ENCODE measurements at regions of chr20 and their contacts with region 1.

Region 1: GRCh38 chr20:50958615-50959542 is at the start of gene MOCS3:
- DNase-seq: peak; percentile 86
- H3K4me3 ChIP-seq: peak within 1 kb of the TSS; percentile 78 to 100 (median 99)
- H3K27ac ChIP-seq: peak within 1 kb of the TSS; percentile 99
- H3K4me1 ChIP-seq: peaks cover 29% of the 10 kb centered on the region
- H3K27me3 ChIP-seq: no peaks in the 10 kb centered on the region
- CTCF ChIP-seq: no peak
- total RNA-seq, gene MOCS3: 7.2 to 10.8 TPM

Region 2: GRCh38 chr20:50895111-50895830 is 63.6 kb before region 1 on chr20:
- CTCF ChIA-PET with region 1: no interaction called
- dilution Hi-C with region 1: no loop called
- in situ Hi-C with region 1: no loop called
- intact Hi-C with region 1: no loop called
- DNase-seq: no peak
- H3K4me3 ChIP-seq: no peak overlapping the region
- H3K27ac ChIP-seq: no peak overlapping the region
- H3K4me1 ChIP-seq: no peaks in the 10 kb centered on the region
- H3K27me3 ChIP-seq: no peaks in the 10 kb centered on the region
- CTCF ChIP-seq: no peak

Region 3: GRCh38 chr20:50919567-50919966 is 39.3 kb before region 1 on chr20:
- CTCF ChIA-PET with region 1: interaction called, 5 read pairs
- dilution Hi-C with region 1: loop called (anchors 5 kb)
- in situ Hi-C with region 1: no loop called
- intact Hi-C with region 1: no loop called
- DNase-seq: peak; percentile 91
- H3K4me3 ChIP-seq: no peak overlapping the region
- H3K27ac ChIP-seq: peak overlapping the region; percentile 70
- H3K4me1 ChIP-seq: peaks cover 36% of the 10 kb centered on the region
- H3K27me3 ChIP-seq: no peaks in the 10 kb centered on the region
- CTCF ChIP-seq: no peak

Region 4: GRCh38 chr20:50929299-50930138 is 29.4 kb before region 1 on chr20:
- CTCF ChIA-PET with region 1: interaction called, 3 read pairs
- dilution Hi-C with region 1: loop called (anchors 5 kb)
- in situ Hi-C with region 1: no loop called
- intact Hi-C with region 1: loop called (anchors 2 kb)
- DNase-seq: peak; percentile 87
- H3K4me3 ChIP-seq: peak overlapping the region; percentile 70 to 93 (median 80)
- H3K27ac ChIP-seq: peak overlapping the region; percentile 74
- H3K4me1 ChIP-seq: peaks cover 20% of the 10 kb centered on the region
- H3K27me3 ChIP-seq: no peaks in the 10 kb centered on the region
- CTCF ChIP-seq: peak; percentile 97 to 100

Region 5: GRCh38 chr20:50980851-50981713 is 22.2 kb after region 1 on chr20:
- CTCF ChIA-PET with region 1: no interaction called
- dilution Hi-C with region 1: no loop called
- in situ Hi-C with region 1: no loop called
- intact Hi-C with region 1: loop called (anchors 1 kb)
- DNase-seq: peak; percentile 52
- H3K4me3 ChIP-seq: no peak overlapping the region
- H3K27ac ChIP-seq: peak overlapping the region; percentile 84
- H3K4me1 ChIP-seq: peaks cover 34% of the 10 kb centered on the region
- H3K27me3 ChIP-seq: no peaks in the 10 kb centered on the region
- CTCF ChIP-seq: peak; percentile 70 to 91

Measured in mammary epithelial cell (primary cell).